ENCODE measurements at regions of chr4 and their contacts with region 1.

Region 1: DNA sequence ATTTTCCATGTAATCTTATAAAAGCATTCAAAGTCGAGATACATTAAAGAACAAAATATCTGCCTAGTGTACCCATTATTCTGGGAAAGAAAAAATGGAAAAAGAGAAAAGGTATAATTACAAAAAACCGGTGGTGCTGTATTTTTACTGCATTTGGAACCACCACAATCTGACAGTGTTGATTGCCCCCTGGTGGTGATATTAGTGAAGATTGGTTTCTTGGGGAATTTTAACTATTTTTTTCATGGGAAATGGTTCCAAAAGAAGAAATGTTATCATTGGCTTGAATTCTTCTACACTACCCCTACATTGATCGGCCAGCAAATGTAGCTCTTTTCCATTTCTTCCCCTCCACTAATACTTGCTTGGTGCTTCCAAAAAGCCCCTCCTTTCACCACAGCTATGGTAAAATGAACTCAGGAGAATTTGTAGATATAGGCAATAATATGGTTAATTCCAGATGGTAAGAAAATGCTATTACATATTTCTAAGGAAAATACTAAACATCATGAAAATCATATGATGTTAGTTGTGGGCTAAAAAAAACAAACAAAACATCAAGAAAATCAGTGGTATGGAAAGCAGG is 50.0 kb downstream of the COX18 start:
- DNase-seq: peak; percentile 66
- H3K4me3 Mint-ChIP-seq: no peak overlapping the region
- H3K27ac Mint-ChIP-seq: no peak overlapping the region
- H3K4me1 Mint-ChIP-seq: no peaks in the 10 kb centered on the region
- H3K27me3 Mint-ChIP-seq: peaks cover 9% of the 10 kb centered on the region
- CTCF ChIP-seq: peak; percentile 62

Region 2: GRCh38 chr4:71732706-71733105 is 1286.8 kb before region 1 on chr4:
- CTCF ChIA-PET with region 1: interaction called, 4 read pairs
- POLR2A ChIA-PET with region 1: no interaction called
- intact Hi-C with region 1: loop called (anchors 1 kb)
- DNase-seq: peak; percentile 54
- H3K4me3 Mint-ChIP-seq: no peak overlapping the region
- H3K27ac Mint-ChIP-seq: no peak overlapping the region
- H3K4me1 Mint-ChIP-seq: no peaks in the 10 kb centered on the region
- H3K27me3 Mint-ChIP-seq: no peaks in the 10 kb centered on the region
- CTCF ChIP-seq: peak; percentile 56

Region 3: GRCh38 chr4:72886602-72887001 is 133.0 kb before region 1 on chr4:
- CTCF ChIA-PET with region 1: interaction called, 6 read pairs
- POLR2A ChIA-PET with region 1: no interaction called
- intact Hi-C with region 1: loop called (anchors 2 kb)
- DNase-seq: peak; percentile 32
- H3K4me3 Mint-ChIP-seq: no peak overlapping the region
- H3K27ac Mint-ChIP-seq: no peak overlapping the region
- H3K4me1 Mint-ChIP-seq: no peaks in the 10 kb centered on the region
- H3K27me3 Mint-ChIP-seq: no peaks in the 10 kb centered on the region
- CTCF ChIP-seq: peak; percentile 50